ENCODE measurements at regions of chr2 and their contacts with region 1.

Region 1: GRCh38 chr2:227033471-227034148 is 130.4 kb downstream of the COL4A4 start:
- DNase-seq: peak; percentile 66 to 86
- H3K4me3 ChIP-seq: no peak overlapping the region
- H3K27ac ChIP-seq: no peak overlapping the region
- H3K4me1 ChIP-seq: no peaks in the 10 kb centered on the region
- H3K27me3 ChIP-seq: no peaks in the 10 kb centered on the region
- CTCF ChIP-seq: peak; percentile 85 to 98 (median 97)
- EP300 ChIP-seq: no peak
- POLR2A ChIP-seq: no peak
- RAD21 ChIP-seq: peak; percentile 73 to 81

Region 2: DNA sequence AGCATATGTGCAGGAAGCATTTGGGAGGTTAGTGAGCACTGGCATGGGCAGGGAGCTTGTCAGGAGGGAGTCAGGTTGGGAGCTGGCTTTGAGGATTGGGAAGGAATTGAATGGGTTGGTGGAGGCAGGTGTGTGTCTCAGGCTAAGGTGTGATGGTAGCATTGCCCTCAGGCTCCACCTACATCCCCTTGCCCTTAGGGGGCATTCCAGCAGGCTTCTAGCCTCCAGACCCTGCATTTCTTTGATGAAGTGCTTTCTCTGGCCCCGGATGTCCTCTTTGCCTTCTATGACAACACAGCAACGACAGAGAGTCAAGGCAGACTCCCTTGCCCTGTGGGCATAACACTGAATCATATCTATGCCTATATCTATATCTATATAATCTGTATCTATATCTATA is 184.3 kb before region 1 on chr2:
- CTCF ChIA-PET with region 1: no interaction called
- POLR2A ChIA-PET with region 1: no interaction called
- DNase-seq: no peak
- H3K4me3 ChIP-seq: no peak overlapping the region
- H3K27ac ChIP-seq: no peak overlapping the region
- H3K4me1 ChIP-seq: peaks cover 0 to 5% (median 1%) of the 10 kb centered on the region in 4 experiments; a peak in 1 of 7 replicates
- H3K27me3 ChIP-seq: no peaks in the 10 kb centered on the region
- CTCF ChIP-seq: peak in 2 of 3 experiments; percentile 15 to 37; a peak in 2 of 4 replicates
- EP300 ChIP-seq: no peak
- POLR2A ChIP-seq: no peak
- RAD21 ChIP-seq: peak in 1 of 2 experiments; percentile 24; a peak in 1 of 4 replicates

Region 3: GRCh38 chr2:226894752-226895151 is 138.9 kb before region 1 on chr2:
- CTCF ChIA-PET with region 1: no interaction called
- POLR2A ChIA-PET with region 1: no interaction called
- DNase-seq: no peak
- H3K4me3 ChIP-seq: no peak overlapping the region
- H3K27ac ChIP-seq: no peak overlapping the region
- H3K4me1 ChIP-seq: no peaks in the 10 kb centered on the region
- H3K27me3 ChIP-seq: no peaks in the 10 kb centered on the region
- CTCF ChIP-seq: no peak
- EP300 ChIP-seq: no peak
- POLR2A ChIP-seq: no peak
- RAD21 ChIP-seq: no peak

Region 4: DNA sequence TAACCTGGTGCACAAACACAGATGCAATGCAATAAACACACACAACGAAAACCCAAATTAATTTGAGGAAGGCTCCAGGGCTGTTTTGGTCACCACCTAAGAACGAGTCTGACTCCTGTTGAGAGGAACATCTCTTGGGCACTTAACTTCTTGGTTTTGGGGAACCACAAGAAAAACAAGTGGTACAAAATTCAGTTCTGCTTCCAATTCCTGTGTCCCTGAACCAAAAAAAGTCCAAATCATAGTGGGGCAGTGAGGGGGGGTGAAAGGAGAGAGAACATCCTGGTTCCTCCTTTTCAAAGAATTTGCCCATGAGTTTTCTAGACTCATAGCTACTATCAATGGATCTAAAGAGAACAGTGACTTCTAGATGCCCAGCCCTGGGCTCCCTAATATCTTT is 13.2 kb before region 1 on chr2:
- CTCF ChIA-PET with region 1: interaction called, 53 read pairs
- POLR2A ChIA-PET with region 1: interaction called, 3 read pairs
- DNase-seq: no peak
- H3K4me3 ChIP-seq: no peak overlapping the region
- H3K27ac ChIP-seq: no peak overlapping the region
- H3K4me1 ChIP-seq: peaks cover 0 to 3% (median 0%) of the 10 kb centered on the region in 4 experiments; a peak in 1 of 7 replicates
- H3K27me3 ChIP-seq: no peaks in the 10 kb centered on the region
- CTCF ChIP-seq: no peak
- EP300 ChIP-seq: no peak
- POLR2A ChIP-seq: no peak
- RAD21 ChIP-seq: no peak

Region 5: GRCh38 chr2:227052879-227053278 is 19.3 kb after region 1 on chr2:
- CTCF ChIA-PET with region 1: interaction called, 21 read pairs
- POLR2A ChIA-PET with region 1: no interaction called
- DNase-seq: no peak
- H3K4me3 ChIP-seq: no peak overlapping the region
- H3K27ac ChIP-seq: no peak overlapping the region
- H3K4me1 ChIP-seq: no peaks in the 10 kb centered on the region
- H3K27me3 ChIP-seq: no peaks in the 10 kb centered on the region
- CTCF ChIP-seq: no peak
- EP300 ChIP-seq: no peak
- POLR2A ChIP-seq: no peak
- RAD21 ChIP-seq: no peak